ENCODE measurements at regions of chr4 and their contacts with region 1.

Region 1: DNA sequence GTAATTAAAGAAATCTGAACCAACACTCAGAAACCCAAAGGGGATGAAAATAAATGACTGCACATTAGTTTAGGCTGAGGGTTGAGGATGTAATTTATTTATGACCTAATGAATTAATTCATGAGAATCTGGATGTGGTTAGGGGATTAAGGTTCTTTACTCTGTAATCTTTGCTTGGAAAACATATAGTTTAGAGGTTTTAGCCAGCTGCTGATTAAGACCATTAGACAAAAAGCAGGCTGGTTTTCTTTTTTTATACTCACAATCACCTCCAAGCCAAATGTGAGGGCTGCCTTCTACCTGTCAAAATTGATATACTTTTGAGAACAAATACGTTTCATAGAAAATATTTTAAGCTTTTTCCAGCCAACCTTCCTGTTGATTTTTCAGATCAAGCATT is 2705.8 kb downstream of the PCDH7 start:
- DNase-seq: no peak
- H3K4me3 Mint-ChIP-seq: no peak overlapping the region
- H3K27ac Mint-ChIP-seq: no peak overlapping the region
- H3K4me1 Mint-ChIP-seq: no peaks in the 10 kb centered on the region
- H3K27me3 Mint-ChIP-seq: no peaks in the 10 kb centered on the region
- CTCF ChIP-seq: no peak

Region 2: GRCh38 chr4:32775032-32775431 is 650.9 kb before region 1 on chr4:
- CTCF ChIA-PET with region 1: no interaction called
- intact Hi-C with region 1: loop called (anchors 5 kb)
- DNase-seq: no peak
- H3K4me3 Mint-ChIP-seq: no peak overlapping the region
- H3K27ac Mint-ChIP-seq: no peak overlapping the region
- H3K4me1 Mint-ChIP-seq: no peaks in the 10 kb centered on the region
- H3K27me3 Mint-ChIP-seq: no peaks in the 10 kb centered on the region
- CTCF ChIP-seq: no peak

Region 3: GRCh38 chr4:33052241-33052640 is 373.7 kb before region 1 on chr4:
- CTCF ChIA-PET with region 1: no interaction called
- intact Hi-C with region 1: no loop called
- DNase-seq: no peak
- H3K4me3 Mint-ChIP-seq: no peak overlapping the region
- H3K27ac Mint-ChIP-seq: no peak overlapping the region
- H3K4me1 Mint-ChIP-seq: no peaks in the 10 kb centered on the region
- H3K27me3 Mint-ChIP-seq: no peaks in the 10 kb centered on the region
- CTCF ChIP-seq: no peak

Region 4: GRCh38 chr4:33467291-33467690 is 41.4 kb after region 1 on chr4:
- CTCF ChIA-PET with region 1: no interaction called
- intact Hi-C with region 1: no loop called
- DNase-seq: no peak
- H3K4me3 Mint-ChIP-seq: no peak overlapping the region
- H3K27ac Mint-ChIP-seq: no peak overlapping the region
- H3K4me1 Mint-ChIP-seq: no peaks in the 10 kb centered on the region
- H3K27me3 Mint-ChIP-seq: no peaks in the 10 kb centered on the region
- CTCF ChIP-seq: no peak